Activated CD4-positive, alpha-beta memory T cell treated with anti-CD3 and anti-CD28 coated beads for 36 hours (primary cell): ENCODE measurements at regions of chr1 and their contacts with region 1.

Region 1: GRCh38 chr1:212595787-212596714 is 12.5 kb upstream of the ATF3 start:
- DNase-seq: peak; percentile 59
- H3K4me3 Mint-ChIP-seq: peak overlapping the region; percentile 53
- H3K27ac Mint-ChIP-seq: peak overlapping the region; percentile 90
- H3K4me1 Mint-ChIP-seq: peaks cover 38% of the 10 kb centered on the region
- H3K27me3 Mint-ChIP-seq: peaks cover 15% of the 10 kb centered on the region

Region 2: GRCh38 chr1:212558693-212559480 is 37.2 kb before region 1 on chr1:
- CTCF ChIA-PET with region 1: no interaction called
- POLR2A ChIA-PET with region 1: interaction called, 7 read pairs
- intact Hi-C with region 1: loop called (anchors 1 kb)
- DNase-seq: peak; percentile 93
- H3K4me3 Mint-ChIP-seq: peak overlapping the region; percentile 45
- H3K27ac Mint-ChIP-seq: peak overlapping the region; percentile 83
- H3K4me1 Mint-ChIP-seq: peaks cover 15% of the 10 kb centered on the region
- H3K27me3 Mint-ChIP-seq: peaks cover 7% of the 10 kb centered on the region

Region 3: GRCh38 chr1:212566522-212567479 is 29.2 kb before region 1 on chr1:
- CTCF ChIA-PET with region 1: interaction called, 8 read pairs
- POLR2A ChIA-PET with region 1: interaction called, 9 read pairs
- intact Hi-C with region 1: loop called (anchors 1 kb)
- DNase-seq: peak; percentile 79
- H3K4me3 Mint-ChIP-seq: peak overlapping the region; percentile 73
- H3K27ac Mint-ChIP-seq: peak overlapping the region; percentile 82
- H3K4me1 Mint-ChIP-seq: peaks cover 33% of the 10 kb centered on the region
- H3K27me3 Mint-ChIP-seq: peaks cover 2% of the 10 kb centered on the region